HCT116 (cell line): ENCODE measurements at regions of chr10 and their contacts with region 1.

Region 1: DNA sequence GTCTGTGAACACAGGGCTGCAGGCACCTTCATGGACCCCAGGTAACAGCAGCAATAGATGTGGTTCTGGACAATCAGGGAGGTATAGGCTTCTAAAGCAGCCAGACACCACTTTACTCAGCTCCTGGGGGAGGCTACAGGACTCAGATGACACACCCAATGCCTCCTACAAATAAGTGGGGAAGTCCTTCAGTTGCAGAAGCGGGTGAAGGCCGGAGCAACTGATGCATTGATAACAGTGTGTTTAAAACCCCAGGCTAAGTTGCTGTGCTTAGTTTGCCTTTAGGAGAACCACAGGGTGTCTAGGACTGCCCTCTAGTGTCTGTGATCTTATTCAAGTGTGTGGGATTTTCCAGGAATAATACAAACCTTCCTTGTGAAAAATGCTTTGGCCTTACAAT is 5.9 kb upstream of the ITGA8 start:
- DNase-seq: peak; percentile 27
- ATAC-seq: peak; percentile 88
- H3K4me3 ChIP-seq: no peak overlapping the region
- H3K27ac ChIP-seq: no peak overlapping the region
- H3K4me1 ChIP-seq: no peaks in the 10 kb centered on the region
- H3K27me3 ChIP-seq: peaks cover 17% of the 10 kb centered on the region
- CTCF ChIP-seq: peak; percentile 53 to 63 (median 54); a peak in 5 of 6 replicates
- POLR2A ChIP-seq: no peak
- RAD21 ChIP-seq: peak; percentile 62

Region 2: GRCh38 chr10:15427843-15428414 is 297.7 kb before region 1 on chr10:
- CTCF ChIA-PET with region 1: no interaction called
- POLR2A ChIA-PET with region 1: no interaction called
- RAD21 ChIA-PET with region 1: no interaction called
- intact Hi-C with region 1: loop called (anchors 2 kb)
- DNase-seq: peak; percentile 35
- ATAC-seq: peak; percentile 84
- H3K4me3 ChIP-seq: no peak overlapping the region
- H3K27ac ChIP-seq: no peak overlapping the region
- H3K4me1 ChIP-seq: no peaks in the 10 kb centered on the region
- H3K27me3 ChIP-seq: no peaks in the 10 kb centered on the region
- CTCF ChIP-seq: peak; percentile 43 to 71 (median 61); a peak in 4 of 6 replicates
- POLR2A ChIP-seq: no peak
- RAD21 ChIP-seq: peak; percentile 76

Region 3: GRCh38 chr10:15433850-15434537 is 291.6 kb before region 1 on chr10:
- CTCF ChIA-PET with region 1: no interaction called
- POLR2A ChIA-PET with region 1: no interaction called
- RAD21 ChIA-PET with region 1: no interaction called
- intact Hi-C with region 1: loop called (anchors 1 kb)
- DNase-seq: peak; percentile 38
- ATAC-seq: peak; percentile 90
- H3K4me3 ChIP-seq: peak overlapping the region; percentile 29 to 37
- H3K27ac ChIP-seq: no peak overlapping the region
- H3K4me1 ChIP-seq: 0 out of 4 replicates have a peak, but pooled peaks cover 0 to 2% of the 10 kb centered on the region in 2 experiments
- H3K27me3 ChIP-seq: no peaks in the 10 kb centered on the region
- CTCF ChIP-seq: peak; percentile 46 to 69 (median 50); a peak in 4 of 6 replicates
- POLR2A ChIP-seq: no peak
- RAD21 ChIP-seq: peak; percentile 60

Region 4: GRCh38 chr10:15585303-15585715 is 140.3 kb before region 1 on chr10:
- CTCF ChIA-PET with region 1: interaction called, 3 read pairs
- POLR2A ChIA-PET with region 1: no interaction called
- RAD21 ChIA-PET with region 1: no interaction called
- intact Hi-C with region 1: loop called (anchors 5 kb)
- DNase-seq: peak; percentile 51
- ATAC-seq: peak; percentile 100
- H3K4me3 ChIP-seq: no peak overlapping the region
- H3K27ac ChIP-seq: no peak overlapping the region
- H3K4me1 ChIP-seq: no peaks in the 10 kb centered on the region
- H3K27me3 ChIP-seq: peaks cover 37% of the 10 kb centered on the region
- CTCF ChIP-seq: peak; percentile 60 to 97 (median 93)
- POLR2A ChIP-seq: no peak
- RAD21 ChIP-seq: peak; percentile 68

Region 5: GRCh38 chr10:15652117-15652516 is 73.5 kb before region 1 on chr10:
- CTCF ChIA-PET with region 1: no interaction called
- POLR2A ChIA-PET with region 1: no interaction called
- RAD21 ChIA-PET with region 1: no interaction called
- intact Hi-C with region 1: loop called (anchors 1 kb)
- DNase-seq: no peak
- ATAC-seq: no peak
- H3K4me3 ChIP-seq: no peak overlapping the region
- H3K27ac ChIP-seq: no peak overlapping the region
- H3K4me1 ChIP-seq: no peaks in the 10 kb centered on the region
- H3K27me3 ChIP-seq: peaks cover 12% of the 10 kb centered on the region
- CTCF ChIP-seq: no peak
- POLR2A ChIP-seq: no peak
- RAD21 ChIP-seq: no peak